Naive thymus-derived CD4-positive, alpha-beta T cell (primary cell): ENCODE measurements at regions of chr11 and their contacts with region 1.

Region 1: DNA sequence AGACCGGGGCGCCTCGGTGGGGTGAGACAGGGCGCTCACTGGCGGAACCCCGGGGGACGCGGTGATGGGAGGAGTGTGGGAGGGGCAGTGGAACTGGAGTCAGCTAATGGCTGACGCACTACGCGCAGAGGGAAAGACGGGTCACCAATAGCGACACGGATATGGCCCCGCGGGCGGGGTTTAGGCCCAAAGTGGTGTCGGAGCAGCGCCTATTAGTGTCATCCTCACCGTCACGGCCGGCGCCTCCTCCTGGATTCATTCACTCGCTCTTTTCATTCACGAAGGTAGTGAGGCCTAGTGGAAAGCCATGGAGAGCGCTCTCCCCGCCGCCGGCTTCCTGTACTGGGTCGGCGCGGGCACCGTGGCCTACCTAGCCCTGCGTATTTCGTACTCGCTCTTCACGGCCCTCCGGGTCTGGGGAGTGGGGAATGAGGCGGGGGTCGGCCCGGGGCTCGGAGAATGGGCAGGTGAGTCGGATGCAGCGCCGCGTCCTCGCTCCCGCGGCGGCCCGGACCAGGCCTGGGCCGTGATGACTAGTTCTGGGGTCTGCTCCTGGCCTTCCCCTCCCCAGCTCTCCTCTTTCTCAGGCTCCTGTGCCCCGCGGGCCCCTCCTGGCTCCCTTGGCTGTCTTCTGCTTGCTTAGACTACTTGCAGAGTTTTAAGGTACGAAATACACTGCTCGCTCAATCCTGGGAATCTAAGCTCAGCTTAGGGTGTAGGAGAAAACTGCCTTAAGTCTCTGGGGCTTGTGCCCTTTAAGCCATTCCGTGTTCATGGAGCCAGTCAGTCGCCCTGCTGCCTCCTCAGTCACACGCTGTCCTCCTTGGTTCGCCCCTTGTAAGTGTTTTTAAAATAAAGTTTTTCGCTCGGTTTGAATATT is at the start of gene HSD17B12:
- DNase-seq: peak; percentile 91 to 100 (median 99)
- ATAC-seq: peak; percentile 99
- H3K4me3 ChIP-seq: peak within 1 kb of the TSS; percentile 81
- H3K4me3 Mint-ChIP-seq: peak within 1 kb of the TSS; percentile 85 to 99 (median 96)
- H3K27ac ChIP-seq: peak within 1 kb of the TSS; percentile 89
- H3K27ac Mint-ChIP-seq: peak within 1 kb of the TSS; percentile 84 to 98 (median 97)
- H3K4me1 ChIP-seq: peaks cover 4 to 8% of the 10 kb centered on the region in 2 donors
- H3K4me1 Mint-ChIP-seq: peaks cover 11 to 59% (median 43%) of the 10 kb centered on the region in 7 donors
- H3K27me3 ChIP-seq: no peaks in the 10 kb centered on the region
- H3K27me3 Mint-ChIP-seq: peaks cover 0 to 14% (median 2%) of the 10 kb centered on the region in 5 donors
- total RNA-seq, gene HSD17B12: 21.1 to 39.5 (median 24.7) TPM

Region 2: GRCh38 chr11:43868852-43869567 is 188.2 kb after region 1 on chr11:
- CTCF ChIA-PET with region 1: no interaction called
- POLR2A ChIA-PET with region 1: no interaction called
- intact Hi-C with region 1: loop called in 1 of 2 experiments (anchors 1 kb)
- DNase-seq: peak in 4 of 9 donors; percentile 8 to 58 (median 12)
- ATAC-seq: peak; percentile 99
- H3K4me3 ChIP-seq: peak overlapping the region; percentile 12
- H3K4me3 Mint-ChIP-seq: peak overlapping the region; percentile 2 to 65 (median 58)
- H3K27ac ChIP-seq: no peak overlapping the region
- H3K27ac Mint-ChIP-seq: peak overlapping the region in 5 of 9 donors; percentile 28 to 82 (median 62)
- H3K4me1 ChIP-seq: peaks cover 8 to 17% of the 10 kb centered on the region in 2 donors
- H3K4me1 Mint-ChIP-seq: peaks cover 8 to 27% (median 11%) of the 10 kb centered on the region in 7 donors
- H3K27me3 ChIP-seq: no peaks in the 10 kb centered on the region
- H3K27me3 Mint-ChIP-seq: peaks cover 21 to 68% (median 24%) of the 10 kb centered on the region in 5 donors